Kidney (tissue), 22 donors: ENCODE measurements at regions of chr3 and their contacts with region 1.

Region 1: GRCh38 chr3:97793420-97794019 is 28.3 kb upstream of the CRYBG3 start:
- DNase-seq: peak in 2 of 5 donors; percentile 67 to 79
- H3K4me3 ChIP-seq: no peak overlapping the region
- H3K27ac ChIP-seq: no peak overlapping the region
- H3K4me1 ChIP-seq: no peaks in the 10 kb centered on the region
- H3K27me3 ChIP-seq: no peaks in the 10 kb centered on the region
- CTCF ChIP-seq: peak; percentile 91

Region 2: DNA sequence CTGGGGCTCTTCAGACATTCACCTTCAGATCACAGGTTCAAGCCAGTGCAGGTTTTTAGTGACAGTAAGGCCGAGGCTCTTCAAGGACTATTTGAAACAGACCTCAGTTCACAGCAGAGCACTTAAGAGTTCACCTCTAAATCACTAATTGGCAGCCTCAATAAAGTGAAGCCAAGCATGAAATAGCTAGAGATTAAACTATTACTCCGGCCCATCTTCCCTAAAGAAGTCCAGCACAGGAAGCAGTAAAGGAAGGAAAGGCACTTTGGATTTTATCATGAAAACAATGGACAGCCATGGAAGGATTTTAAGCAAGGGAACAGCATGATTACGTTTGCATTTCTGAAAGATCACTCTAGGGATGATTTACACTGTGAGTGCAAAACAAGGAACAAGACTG is 56.6 kb before region 1 on chr3:
- intact Hi-C with region 1: no loop called
- DNase-seq: peak in 3 of 5 donors; percentile 18 to 90 (median 86)
- H3K4me3 ChIP-seq: no peak overlapping the region
- H3K27ac ChIP-seq: no peak overlapping the region
- H3K4me1 ChIP-seq: peaks cover 0 to 4% (median 0%) of the 10 kb centered on the region in 3 donors
- H3K27me3 ChIP-seq: no peaks in the 10 kb centered on the region
- CTCF ChIP-seq: no peak

Region 3: DNA sequence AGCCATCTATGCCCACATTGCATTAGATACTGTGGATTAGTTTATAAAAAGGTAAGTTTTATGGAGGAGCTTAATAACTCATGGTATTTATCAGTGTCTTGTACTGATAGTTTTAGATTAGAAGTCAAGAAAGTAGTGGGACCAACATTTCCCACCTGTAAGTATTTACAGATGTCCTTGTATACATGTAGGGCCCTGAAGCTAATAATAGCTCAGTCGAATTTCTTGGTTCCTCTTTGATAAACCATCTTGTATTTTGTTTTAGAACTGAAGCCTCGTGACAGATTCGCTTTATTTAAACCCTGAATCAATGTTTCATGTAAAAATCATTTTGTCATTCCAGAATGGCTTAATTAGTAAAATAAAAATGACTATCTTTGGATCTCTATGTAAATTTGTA is 101.7 kb after region 1 on chr3:
- intact Hi-C with region 1: no loop called
- DNase-seq: no peak
- H3K4me3 ChIP-seq: no peak overlapping the region
- H3K27ac ChIP-seq: no peak overlapping the region
- H3K4me1 ChIP-seq: no peaks in the 10 kb centered on the region
- H3K27me3 ChIP-seq: no peaks in the 10 kb centered on the region
- CTCF ChIP-seq: no peak

Region 4: DNA sequence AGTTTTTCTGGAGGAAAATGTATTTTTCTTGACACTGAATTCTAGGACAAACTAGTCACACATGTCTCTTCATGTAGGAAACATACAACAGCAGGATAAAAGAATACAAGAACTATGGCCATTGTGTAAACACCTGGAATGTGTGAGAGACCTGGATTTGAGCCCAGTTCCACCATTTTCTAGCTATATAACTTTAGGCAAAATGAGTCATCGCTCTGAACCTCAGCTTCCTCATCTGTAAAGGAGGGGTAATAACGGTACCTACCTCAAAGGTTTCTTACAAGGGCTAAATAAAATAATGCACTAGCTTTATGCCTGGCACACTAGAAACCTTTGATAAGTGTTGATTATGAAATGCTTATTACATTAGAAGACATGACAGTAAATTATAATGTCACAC is 120.9 kb after region 1 on chr3:
- intact Hi-C with region 1: no loop called
- DNase-seq: no peak
- H3K4me3 ChIP-seq: no peak overlapping the region
- H3K27ac ChIP-seq: no peak overlapping the region
- H3K4me1 ChIP-seq: no peaks in the 10 kb centered on the region
- H3K27me3 ChIP-seq: no peaks in the 10 kb centered on the region
- CTCF ChIP-seq: no peak

Region 5: GRCh38 chr3:98022978-98023820 is 229.7 kb after region 1 on chr3:
- intact Hi-C with region 1: loop called (anchors 5 kb)
- DNase-seq: peak; percentile 85 to 93 (median 91)
- H3K4me3 ChIP-seq: no peak overlapping the region
- H3K27ac ChIP-seq: no peak overlapping the region
- H3K4me1 ChIP-seq: peaks cover 0 to 3% (median 0%) of the 10 kb centered on the region in 3 donors
- H3K27me3 ChIP-seq: no peaks in the 10 kb centered on the region
- CTCF ChIP-seq: peak; percentile 96